Heart left ventricle (tissue), 16 donors: ENCODE measurements at regions of chr16 and their contacts with region 1.

Region 1: DNA sequence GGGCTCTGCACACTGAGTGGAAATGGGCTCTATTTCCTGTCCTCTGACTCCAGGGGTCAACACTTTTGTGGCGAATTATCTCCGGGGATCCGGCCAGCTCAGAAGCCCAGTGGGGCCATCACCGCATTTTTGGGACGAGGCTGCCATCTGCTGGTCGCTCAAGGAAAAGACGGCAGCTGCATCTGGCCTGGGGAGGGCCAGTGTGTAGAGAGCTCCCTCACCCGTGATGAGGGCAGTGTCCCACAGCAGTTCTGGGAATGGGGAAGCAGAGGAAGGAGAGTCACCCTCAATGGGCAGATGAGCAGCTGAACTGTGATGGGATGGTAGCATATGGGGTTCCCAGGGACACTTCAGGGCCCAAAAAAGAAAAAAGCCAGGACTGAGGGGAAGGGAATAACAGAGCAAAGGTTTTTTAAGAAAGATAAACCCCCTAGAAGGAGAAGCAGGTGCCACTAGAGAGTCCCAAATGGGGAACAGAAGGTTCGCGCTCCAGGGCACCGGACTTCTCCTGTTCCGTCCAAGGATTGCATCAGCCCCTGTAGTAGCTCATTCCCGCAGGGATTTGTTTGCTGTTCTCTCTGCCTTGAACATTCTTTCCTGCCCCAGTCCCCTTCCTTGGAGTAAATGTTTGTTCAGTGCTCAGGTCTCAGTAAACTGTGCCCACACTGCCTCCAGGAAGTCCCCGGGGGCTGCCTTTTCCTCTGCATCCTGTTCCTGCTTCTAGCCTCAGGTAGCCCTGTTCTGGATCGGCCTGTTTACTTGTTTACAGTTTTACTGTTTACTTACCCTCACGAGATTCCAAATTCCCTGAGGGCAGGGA is 9.3 kb upstream of the ABCC12 start:
- DNase-seq: peak; percentile 65 to 88 (median 77)
- ATAC-seq: peak; percentile 87 to 96 (median 94)
- H3K4me3 ChIP-seq: no peak overlapping the region
- H3K27ac ChIP-seq: no peak overlapping the region
- H3K4me1 ChIP-seq: peaks cover 0 to 15% (median 5%) of the 10 kb centered on the region in 12 donors
- H3K27me3 ChIP-seq: no peaks in the 10 kb centered on the region
- CTCF ChIP-seq: peak; percentile 76 to 94 (median 85)
- POLR2A ChIP-seq: no peak

Region 2: GRCh38 chr16:46555951-46556350 is 1609.2 kb before region 1 on chr16:
- intact Hi-C with region 1: loop called in 3 of 10 experiments (anchors 10 kb)
- DNase-seq: no peak
- ATAC-seq: no peak
- H3K4me3 ChIP-seq: no peak overlapping the region
- H3K27ac ChIP-seq: no peak overlapping the region
- H3K4me1 ChIP-seq: peaks cover 0 to 6% (median 0%) of the 10 kb centered on the region in 12 donors
- H3K27me3 ChIP-seq: peaks cover 0 to 26% (median 3%) of the 10 kb centered on the region in 9 donors
- CTCF ChIP-seq: no peak
- POLR2A ChIP-seq: no peak

Region 3: DNA sequence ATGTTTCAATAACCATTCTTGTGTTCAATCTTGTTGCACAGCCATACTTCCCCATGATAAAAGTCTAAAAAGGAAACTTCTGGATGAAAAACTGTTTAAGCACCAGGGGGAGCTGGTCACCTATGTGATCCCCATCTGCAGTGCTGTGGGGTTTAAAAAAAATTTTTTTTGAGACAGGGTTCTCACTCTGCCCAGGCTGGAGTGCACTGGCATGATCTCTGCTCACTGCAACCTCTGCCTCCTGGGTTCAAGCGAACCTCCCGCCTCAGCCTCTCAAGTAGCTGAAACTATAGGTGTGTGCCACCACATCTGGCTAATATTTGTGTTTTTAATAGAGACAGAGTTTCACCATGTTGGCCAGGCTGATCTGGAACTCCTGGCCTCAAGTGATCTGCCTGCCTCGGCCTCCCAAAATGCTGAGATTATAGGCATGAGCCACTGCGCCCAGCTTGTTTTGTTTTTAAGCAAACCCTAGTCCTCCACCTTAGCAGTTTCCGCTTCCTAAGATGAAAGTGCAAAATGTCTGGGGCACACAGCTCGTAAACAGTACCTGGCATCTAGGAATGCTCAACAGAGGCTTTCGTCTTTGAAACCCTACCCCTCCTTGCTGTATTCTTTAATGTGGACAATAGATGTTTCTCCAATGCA is 1217.1 kb before region 1 on chr16:
- intact Hi-C with region 1: loop called in 5 of 10 experiments (anchors 10 kb)
- DNase-seq: no peak
- ATAC-seq: peak in 1 of 4 donors; percentile 36
- H3K4me3 ChIP-seq: no peak overlapping the region
- H3K27ac ChIP-seq: no peak overlapping the region
- H3K4me1 ChIP-seq: no peaks in the 10 kb centered on the region
- H3K27me3 ChIP-seq: no peaks in the 10 kb centered on the region
- CTCF ChIP-seq: peak in 11 of 12 donors; percentile 19 to 53 (median 38)
- POLR2A ChIP-seq: no peak

Region 4: DNA sequence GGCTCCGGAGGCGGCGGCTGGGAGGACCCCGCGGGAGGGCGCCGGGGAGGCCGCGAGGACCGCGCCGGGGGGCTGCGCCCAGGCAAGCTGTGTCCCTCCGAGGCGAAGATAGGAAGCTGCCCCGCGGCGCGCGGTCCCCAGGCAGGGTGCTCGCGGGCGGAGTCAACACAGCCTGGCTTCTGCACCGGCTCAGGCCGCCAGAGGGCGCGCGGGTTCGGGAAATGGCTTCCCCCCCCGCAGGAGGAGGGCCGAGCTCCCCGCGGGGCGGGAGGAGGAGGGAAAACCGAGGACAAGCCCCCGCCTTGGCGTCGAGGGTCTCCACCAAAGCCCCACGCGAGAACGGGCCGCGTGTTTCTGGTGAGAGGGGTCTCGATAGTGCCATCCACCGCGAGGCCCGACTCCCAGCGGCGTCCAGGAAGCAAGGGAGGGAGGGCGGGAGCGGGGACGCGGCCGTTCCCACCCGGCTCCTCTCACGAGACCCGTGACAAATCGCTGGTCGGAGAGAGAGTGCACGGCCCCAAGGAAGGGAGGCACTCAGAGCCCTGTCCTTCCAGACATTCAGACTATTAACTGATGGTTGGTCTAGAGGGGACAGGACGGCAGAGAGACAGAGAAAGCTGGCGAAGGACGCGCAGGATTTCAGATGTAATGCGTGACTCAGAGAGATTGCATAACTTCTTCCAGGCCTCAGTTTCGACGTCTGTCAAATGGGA is 1127.2 kb before region 1 on chr16:
- intact Hi-C with region 1: loop called in 7 of 10 experiments (anchors 5 to 10 kb)
- DNase-seq: peak; percentile 89 to 95 (median 90)
- ATAC-seq: peak; percentile 85 to 99 (median 98)
- H3K4me3 ChIP-seq: peak overlapping the region; percentile 60 to 78 (median 66)
- H3K27ac ChIP-seq: peak overlapping the region in 6 of 12 donors; percentile 29 to 68 (median 50)
- H3K4me1 ChIP-seq: peaks cover 0 to 12% (median 3%) of the 10 kb centered on the region in 12 donors
- H3K27me3 ChIP-seq: no peaks in the 10 kb centered on the region
- CTCF ChIP-seq: peak; percentile 87 to 98 (median 94)
- POLR2A ChIP-seq: no peak

Region 5: GRCh38 chr16:47258874-47259461 is 906.1 kb before region 1 on chr16:
- intact Hi-C with region 1: loop called in 2 of 10 experiments (anchors 5 to 10 kb)
- DNase-seq: no peak
- ATAC-seq: no peak
- H3K4me3 ChIP-seq: no peak overlapping the region
- H3K27ac ChIP-seq: no peak overlapping the region
- H3K4me1 ChIP-seq: no peaks in the 10 kb centered on the region
- H3K27me3 ChIP-seq: no peaks in the 10 kb centered on the region
- CTCF ChIP-seq: peak; percentile 40 to 69 (median 52)
- POLR2A ChIP-seq: no peak